Prostate gland (tissue), 2 donors: ENCODE measurements at regions of chr7 and their contacts with region 1.

Region 1: GRCh38 chr7:36152756-36153570 is at the start of gene EEPD1:
- DNase-seq: peak; percentile 100
- H3K4me3 ChIP-seq: peak within 1 kb of the TSS; percentile 61 to 77
- H3K27ac ChIP-seq: peak within 1 kb of the TSS; percentile 83 to 84
- H3K4me1 ChIP-seq: peaks cover 8% of the 10 kb centered on the region
- H3K27me3 ChIP-seq: no peaks in the 10 kb centered on the region
- CTCF ChIP-seq: peak in 1 of 4 experiments; percentile 3
- POLR2A ChIP-seq: peak; percentile 96
- total RNA-seq, gene EEPD1: 21.9 to 30.1 TPM

Region 2: DNA sequence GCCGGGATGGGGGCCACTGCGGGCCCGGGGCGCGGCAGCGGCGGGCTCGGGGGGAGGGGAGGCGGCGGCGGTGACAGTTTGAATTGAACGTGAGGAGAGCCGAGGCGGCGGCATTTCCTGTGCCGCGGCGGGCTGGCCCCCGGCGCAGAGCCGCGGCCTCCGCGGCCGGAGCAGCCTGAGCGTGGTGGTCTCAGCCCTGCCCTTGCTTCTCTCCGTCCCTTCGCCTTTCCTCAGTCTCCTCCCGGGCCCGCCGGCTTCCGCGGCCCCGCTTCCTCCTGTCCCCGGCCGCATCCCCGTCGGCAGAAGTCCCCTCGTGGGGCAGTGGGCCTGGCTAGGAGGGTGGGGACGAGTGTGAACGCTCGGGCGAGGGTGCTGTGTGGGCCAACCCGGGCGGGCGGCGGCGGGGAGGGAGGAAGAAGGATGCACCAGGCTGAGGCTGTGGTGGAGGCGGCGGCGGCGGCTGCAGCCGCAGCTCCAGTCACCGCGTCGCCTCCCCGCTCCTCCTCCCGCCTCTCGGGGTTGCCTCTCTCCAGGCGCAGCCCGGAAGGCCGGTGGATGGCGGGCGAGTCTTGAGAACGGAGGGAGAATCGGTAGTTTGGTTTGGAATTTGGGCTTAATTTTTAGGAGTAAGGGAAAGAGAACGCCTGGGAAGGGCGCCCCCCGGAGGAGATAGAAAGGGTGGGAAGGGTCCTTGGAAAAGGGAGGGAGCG is 351.4 kb before region 1 on chr7:
- intact Hi-C with region 1: loop called (anchors 5 kb)
- DNase-seq: peak; percentile 60
- H3K4me3 ChIP-seq: peak overlapping the region; percentile 56 to 90
- H3K27ac ChIP-seq: peak overlapping the region; percentile 89 to 96
- H3K4me1 ChIP-seq: no peaks in the 10 kb centered on the region
- H3K27me3 ChIP-seq: no peaks in the 10 kb centered on the region
- CTCF ChIP-seq: peak; percentile 30 to 50 (median 43)
- POLR2A ChIP-seq: no peak

Region 3: DNA sequence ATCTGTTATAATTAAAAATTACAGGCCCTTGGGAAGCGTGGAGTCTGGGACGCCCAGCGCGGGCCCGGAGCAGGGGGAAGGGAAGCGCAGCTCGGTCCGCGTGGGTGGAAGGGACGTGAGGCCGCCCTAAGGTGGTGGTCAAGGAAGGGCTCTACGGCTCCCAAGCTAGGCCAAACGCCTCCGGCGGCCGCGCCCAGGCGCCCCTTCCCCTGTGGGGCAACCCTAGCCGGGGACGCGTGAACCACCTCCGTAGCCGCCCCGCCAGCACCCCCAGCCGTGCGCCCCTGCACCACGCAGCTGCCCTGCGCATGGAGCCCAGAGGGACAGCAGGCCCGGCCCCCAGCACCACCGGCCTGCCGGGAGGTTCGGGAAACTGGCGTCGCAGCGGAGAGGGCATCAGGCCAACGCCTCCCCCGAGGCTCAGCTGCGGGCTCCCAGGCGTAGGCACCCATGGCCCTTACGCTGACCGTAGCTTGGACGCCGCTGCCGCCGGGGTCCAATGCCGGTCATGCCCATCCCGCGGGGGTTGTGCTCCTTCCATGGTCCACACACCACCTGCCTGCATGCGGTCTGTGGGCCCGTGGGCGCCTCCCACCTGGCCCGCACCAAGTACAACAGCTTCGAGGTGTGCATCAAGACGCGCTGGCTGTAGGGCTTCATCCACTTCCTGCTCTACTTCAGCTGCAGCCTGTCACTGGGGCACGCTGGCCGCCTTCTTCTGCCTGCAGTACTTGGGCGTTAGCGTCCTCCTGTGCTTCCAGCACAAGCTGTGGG is 185.4 kb before region 1 on chr7:
- intact Hi-C with region 1: no loop called
- DNase-seq: no peak
- H3K4me3 ChIP-seq: no peak overlapping the region
- H3K27ac ChIP-seq: no peak overlapping the region
- H3K4me1 ChIP-seq: no peaks in the 10 kb centered on the region
- H3K27me3 ChIP-seq: no peaks in the 10 kb centered on the region
- CTCF ChIP-seq: no peak
- POLR2A ChIP-seq: no peak

Region 4: GRCh38 chr7:36048141-36048901 is 104.6 kb before region 1 on chr7:
- intact Hi-C with region 1: loop called (anchors 5 kb)
- DNase-seq: peak; percentile 73
- H3K4me3 ChIP-seq: no peak overlapping the region
- H3K27ac ChIP-seq: peak overlapping the region in 1 of 2 donors; percentile 59
- H3K4me1 ChIP-seq: no peaks in the 10 kb centered on the region
- H3K27me3 ChIP-seq: no peaks in the 10 kb centered on the region
- CTCF ChIP-seq: no peak
- POLR2A ChIP-seq: no peak

Region 5: DNA sequence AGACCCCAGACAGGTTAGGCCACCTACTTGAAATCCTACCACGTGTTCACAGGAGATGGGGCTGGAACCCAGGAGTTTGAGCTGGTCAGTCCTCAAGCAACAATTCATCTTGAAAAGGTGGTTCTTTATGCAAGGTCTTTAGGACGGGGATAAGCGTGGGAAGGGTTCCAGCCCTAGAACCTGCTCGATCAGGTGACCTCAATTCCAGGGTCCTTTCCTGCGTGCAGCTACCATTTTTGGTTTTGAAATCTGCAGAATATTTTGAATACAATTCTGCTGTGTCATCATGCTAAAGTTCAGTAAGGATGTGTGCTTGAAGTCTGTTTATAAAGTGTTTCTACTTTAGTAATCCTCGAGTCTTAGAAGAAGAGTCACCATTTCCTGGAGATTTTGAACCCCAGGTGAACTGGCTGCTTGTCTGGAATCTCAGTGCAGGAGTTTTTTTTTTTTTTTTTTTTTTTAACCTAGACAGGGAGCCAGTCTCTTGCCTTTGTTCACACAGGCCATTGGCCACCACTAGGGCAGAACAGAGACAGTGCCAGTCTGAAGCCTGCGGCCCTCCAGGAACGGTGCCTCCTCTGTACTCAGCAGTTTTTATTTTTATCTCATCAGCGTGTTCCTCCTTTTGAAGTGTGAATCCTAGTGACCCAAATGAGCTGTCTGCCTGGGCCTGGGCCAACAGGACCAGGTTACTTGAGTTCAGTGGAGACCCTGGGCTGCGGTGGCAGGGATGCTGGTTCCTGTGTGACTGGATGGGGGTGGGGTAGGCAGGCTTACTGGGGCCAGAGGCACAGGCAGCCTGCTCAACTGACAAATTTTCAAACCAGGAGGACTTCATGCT is 54.7 kb after region 1 on chr7:
- intact Hi-C with region 1: loop called (anchors 5 kb)
- DNase-seq: no peak
- H3K4me3 ChIP-seq: no peak overlapping the region
- H3K27ac ChIP-seq: peak overlapping the region; percentile 6 to 31
- H3K4me1 ChIP-seq: peaks cover 7% of the 10 kb centered on the region
- H3K27me3 ChIP-seq: no peaks in the 10 kb centered on the region
- CTCF ChIP-seq: peak in 1 of 4 experiments; percentile 10
- POLR2A ChIP-seq: no peak

Region 6: DNA sequence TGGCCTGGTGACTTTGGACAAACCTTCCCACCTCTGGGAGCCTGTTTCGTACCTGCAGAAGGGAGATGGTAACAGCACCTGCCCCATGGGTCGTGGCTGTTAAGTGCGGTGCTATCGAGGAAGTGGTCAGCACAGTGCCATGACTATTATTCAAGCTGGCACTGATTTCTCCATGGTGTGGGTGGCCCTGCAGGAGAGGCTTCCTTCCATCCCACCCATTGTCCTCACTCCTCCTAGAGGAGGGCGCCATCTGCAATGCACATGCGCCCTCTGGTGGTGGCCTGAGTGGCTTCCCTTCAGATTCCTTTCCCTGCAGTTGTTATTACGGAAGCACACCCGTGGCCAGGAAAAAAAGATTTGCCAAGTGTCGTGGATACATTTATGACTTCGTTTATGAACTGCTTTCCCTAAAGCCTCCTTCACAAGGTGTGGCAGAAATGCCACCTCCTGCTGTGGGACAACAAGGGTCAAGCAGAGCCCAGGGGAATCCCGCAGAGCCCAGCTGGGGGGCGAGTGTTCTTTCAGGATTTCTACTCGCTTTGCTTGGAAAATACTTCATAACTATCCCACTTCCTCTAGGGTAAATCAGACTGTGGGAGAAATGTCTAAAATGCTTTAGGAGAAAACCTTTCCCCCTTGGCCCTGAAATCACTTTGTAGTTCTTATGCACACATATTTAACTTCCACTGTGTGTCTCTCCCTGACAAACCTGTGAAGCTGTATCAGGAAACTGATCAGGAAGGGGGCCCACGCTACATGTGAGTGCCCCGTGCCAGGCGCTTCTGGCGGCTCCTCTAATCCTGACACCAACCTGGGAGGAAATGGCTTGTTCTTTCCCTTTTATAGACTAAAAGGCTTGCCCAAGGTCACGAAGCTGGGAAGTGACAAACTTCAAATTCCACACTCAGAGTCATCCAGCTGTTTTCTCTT is 138.7 kb after region 1 on chr7:
- intact Hi-C with region 1: loop called (anchors 2 kb)
- DNase-seq: peak; percentile 88
- H3K4me3 ChIP-seq: peak overlapping the region in 1 of 2 donors; percentile 6
- H3K27ac ChIP-seq: peak overlapping the region; percentile 79 to 80
- H3K4me1 ChIP-seq: peaks cover 20% of the 10 kb centered on the region
- H3K27me3 ChIP-seq: no peaks in the 10 kb centered on the region
- CTCF ChIP-seq: peak; percentile 94 to 99 (median 98)
- POLR2A ChIP-seq: no peak